ENCODE measurements at regions of chr1 and their contacts with region 1.

Region 1: GRCh38 chr1:16954579-16954978 is 25.8 kb downstream of the MFAP2 start:
- DNase-seq: no peak
- ATAC-seq: no peak

Region 2: DNA sequence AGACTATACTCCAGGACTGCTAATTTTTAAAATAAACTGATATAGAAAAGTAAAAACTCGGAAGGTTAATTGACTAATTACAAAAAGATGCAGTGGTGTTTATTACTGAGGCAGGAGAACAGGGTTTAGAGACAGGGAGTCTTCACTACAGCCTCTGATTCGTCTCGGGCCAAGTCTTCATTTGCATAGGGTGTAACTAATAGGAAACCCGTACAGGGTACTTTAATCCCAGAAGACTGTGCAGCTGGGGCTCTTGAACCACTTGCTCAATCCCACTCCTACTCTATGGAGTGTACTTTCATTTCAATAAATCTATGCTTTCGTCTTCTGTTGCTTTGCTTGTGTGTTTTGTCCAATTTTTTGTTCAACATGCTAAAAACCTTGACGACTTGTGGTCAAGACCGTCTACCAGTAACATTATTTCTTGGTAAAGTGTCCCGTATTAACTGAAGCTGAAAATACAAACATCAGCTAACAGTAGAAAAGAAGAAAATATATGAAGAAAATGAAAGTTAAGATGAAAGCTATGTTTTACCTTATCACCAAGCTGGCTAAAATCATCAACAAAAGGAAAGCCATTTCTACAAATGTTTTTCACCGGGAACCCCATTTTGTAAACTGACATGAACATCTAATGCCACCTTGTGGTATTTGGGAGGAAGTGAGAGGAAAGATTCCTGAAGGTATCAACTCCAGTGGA is 91.2 kb after region 1 on chr1:
- intact Hi-C with region 1: loop called (anchors 5 kb)
- DNase-seq: no peak
- ATAC-seq: peak; percentile 80

Region 3: GRCh38 chr1:17236779-17237560 is 282.4 kb after region 1 on chr1:
- intact Hi-C with region 1: loop called (anchors 5 kb)
- DNase-seq: peak; percentile 91
- ATAC-seq: peak; percentile 76